ENCODE measurements at regions of chr16 and their contacts with region 1.

Region 1: GRCh38 chr16:84271866-84272265 is 22.8 kb upstream of the WFDC1 start:
- DNase-seq: no peak
- H3K4me3 ChIP-seq: no peak overlapping the region
- H3K27ac ChIP-seq: no peak overlapping the region
- H3K4me1 ChIP-seq: no peaks in the 10 kb centered on the region
- H3K27me3 ChIP-seq: peaks cover 0 to 12% of the 10 kb centered on the region in 2 donors
- CTCF ChIP-seq: no peak

Region 2: DNA sequence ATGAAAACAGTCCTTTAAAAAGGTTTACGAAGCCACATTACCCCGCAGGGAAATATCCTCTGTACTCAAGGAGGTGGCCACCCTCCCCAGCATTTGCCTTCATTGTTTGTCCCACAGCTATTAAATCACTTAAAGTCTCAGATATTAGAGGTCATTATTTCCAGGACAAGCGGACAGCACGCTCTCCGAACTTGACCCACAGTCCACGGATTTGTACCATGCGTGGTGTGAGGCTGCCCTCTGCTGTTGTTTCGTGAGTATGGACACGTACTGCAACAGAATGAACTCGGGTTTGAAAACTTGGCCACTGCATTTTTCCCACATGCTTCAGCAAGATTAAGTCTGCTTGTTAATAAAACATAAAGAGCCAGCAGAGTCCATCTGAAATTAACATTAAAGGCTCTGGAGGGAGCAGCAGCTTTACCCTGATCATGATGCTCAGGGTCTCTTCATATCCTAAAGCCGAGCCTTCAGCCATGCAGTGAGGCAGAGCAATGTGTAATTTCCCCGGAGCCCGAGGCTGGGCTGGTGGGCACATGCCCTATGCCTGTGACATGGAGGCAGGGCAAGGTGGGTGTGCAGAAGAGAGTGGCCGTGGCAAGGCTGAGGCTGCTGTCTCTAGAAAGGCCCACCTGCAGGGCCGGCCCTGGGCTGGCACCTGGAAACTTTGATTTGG is 212.9 kb after region 1 on chr16:
- intact Hi-C with region 1: loop called (anchors 5 kb)
- DNase-seq: peak; percentile 38 to 71
- H3K4me3 ChIP-seq: no peak overlapping the region
- H3K27ac ChIP-seq: no peak overlapping the region
- H3K4me1 ChIP-seq: no peaks in the 10 kb centered on the region
- H3K27me3 ChIP-seq: no peaks in the 10 kb centered on the region
- CTCF ChIP-seq: peak; percentile 63 to 65

Region 3: DNA sequence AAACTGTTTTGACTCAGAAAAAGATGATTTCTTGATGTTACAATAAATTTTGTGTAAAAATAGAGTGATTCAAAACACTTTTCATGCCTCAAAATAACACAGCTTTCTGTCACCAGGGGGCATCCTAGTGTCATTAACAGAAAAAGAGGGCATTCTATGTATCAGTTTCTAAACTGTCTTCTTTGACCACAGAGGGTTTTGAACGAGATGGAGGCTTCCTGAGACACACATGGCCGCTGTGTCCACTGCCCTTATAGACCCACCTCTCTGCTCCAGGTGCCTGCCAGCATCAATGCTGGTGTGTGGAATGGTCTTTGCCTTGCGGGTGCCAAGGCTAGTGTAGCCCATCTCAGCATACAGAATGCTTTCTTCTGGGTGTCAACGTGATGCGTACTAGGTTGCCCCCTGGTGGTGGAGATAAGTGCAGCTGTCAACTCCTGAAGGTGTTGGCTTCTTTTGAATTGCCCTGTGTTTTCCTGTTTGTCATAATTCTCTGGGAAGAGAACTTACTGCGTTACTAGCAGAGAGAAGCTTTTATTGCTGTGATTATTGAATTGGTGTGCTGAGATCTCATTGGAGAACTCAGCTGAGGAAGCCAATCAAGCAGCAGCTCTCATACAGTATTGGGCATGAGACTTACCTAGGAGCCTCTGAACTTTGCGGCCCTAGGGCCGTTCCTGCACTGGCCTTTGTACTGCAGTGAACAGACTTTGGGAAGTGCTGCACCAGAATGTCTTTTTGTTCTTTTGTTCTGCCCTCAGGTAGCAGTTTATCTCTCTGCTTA is 466.6 kb after region 1 on chr16:
- intact Hi-C with region 1: no loop called
- DNase-seq: peak; percentile 77 to 81
- H3K4me3 ChIP-seq: no peak overlapping the region
- H3K27ac ChIP-seq: no peak overlapping the region
- H3K4me1 ChIP-seq: peaks cover 0 to 39% (median 13%) of the 10 kb centered on the region in 4 donors
- H3K27me3 ChIP-seq: no peaks in the 10 kb centered on the region
- CTCF ChIP-seq: peak; percentile 83 to 87

Measured in tibial artery (tissue), 4 donors.